Dendritic cell treated with granulocyte-macrophage colony-stimulating factor and Interleukin-4, amounts not matched to agents 40 ng/mL and 50 ng/mL, for 4 days (primary cell): ENCODE measurements at regions of chr1 and their contacts with region 1.

Region 1: GRCh38 chr1:37323486-37324377 is 150.6 kb upstream of the ZC3H12A start:
- H3K4me3 Mint-ChIP-seq: no peak overlapping the region
- H3K27ac Mint-ChIP-seq: no peak overlapping the region
- H3K4me1 Mint-ChIP-seq: no peaks in the 10 kb centered on the region
- H3K27me3 Mint-ChIP-seq: peaks cover 40% of the 10 kb centered on the region

Region 2: GRCh38 chr1:36576118-36576517 is 747.6 kb before region 1 on chr1:
- intact Hi-C with region 1: loop called (anchors 5 kb)
- H3K4me3 Mint-ChIP-seq: no peak overlapping the region
- H3K27ac Mint-ChIP-seq: no peak overlapping the region
- H3K4me1 Mint-ChIP-seq: no peaks in the 10 kb centered on the region
- H3K27me3 Mint-ChIP-seq: peaks cover 28% of the 10 kb centered on the region

Region 3: DNA sequence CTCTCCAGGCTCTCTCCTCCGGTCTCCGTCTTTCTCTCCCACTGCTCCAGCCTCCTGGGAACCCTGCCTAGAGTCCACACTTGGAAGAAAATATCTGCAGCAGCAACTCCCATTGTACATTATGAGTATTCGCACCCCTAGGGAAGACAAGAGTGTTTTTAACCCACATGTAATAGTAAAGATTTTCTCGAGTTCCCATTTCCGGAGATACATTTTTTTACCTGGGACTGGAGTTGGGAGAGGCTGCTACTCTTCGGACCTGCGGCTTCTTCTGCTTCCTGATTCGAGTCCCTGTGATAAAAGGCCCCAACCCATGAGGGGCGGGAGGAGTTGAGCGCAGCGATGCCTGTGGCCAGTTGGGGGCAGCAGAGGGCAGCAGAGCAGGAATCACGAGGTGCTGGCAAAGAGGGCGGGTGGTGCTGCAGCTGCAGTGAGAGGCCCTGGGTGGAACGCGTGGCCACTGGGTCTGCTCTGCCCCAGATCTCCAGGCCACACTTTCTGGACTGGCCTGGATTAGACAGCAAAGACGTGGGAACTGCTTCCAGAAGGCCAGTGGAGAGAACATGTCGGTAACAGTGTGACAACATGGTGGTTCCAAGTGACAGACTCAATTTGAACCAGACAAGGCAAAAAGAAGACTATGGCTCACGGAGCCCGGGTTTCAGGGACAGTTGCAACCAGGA is 620.1 kb before region 1 on chr1:
- intact Hi-C with region 1: loop called (anchors 10 kb)
- H3K4me3 Mint-ChIP-seq: no peak overlapping the region
- H3K27ac Mint-ChIP-seq: no peak overlapping the region
- H3K4me1 Mint-ChIP-seq: peaks cover 28% of the 10 kb centered on the region
- H3K27me3 Mint-ChIP-seq: peaks cover 35% of the 10 kb centered on the region